ENCODE measurements at regions of chr10 and their contacts with region 1.

Region 1: DNA sequence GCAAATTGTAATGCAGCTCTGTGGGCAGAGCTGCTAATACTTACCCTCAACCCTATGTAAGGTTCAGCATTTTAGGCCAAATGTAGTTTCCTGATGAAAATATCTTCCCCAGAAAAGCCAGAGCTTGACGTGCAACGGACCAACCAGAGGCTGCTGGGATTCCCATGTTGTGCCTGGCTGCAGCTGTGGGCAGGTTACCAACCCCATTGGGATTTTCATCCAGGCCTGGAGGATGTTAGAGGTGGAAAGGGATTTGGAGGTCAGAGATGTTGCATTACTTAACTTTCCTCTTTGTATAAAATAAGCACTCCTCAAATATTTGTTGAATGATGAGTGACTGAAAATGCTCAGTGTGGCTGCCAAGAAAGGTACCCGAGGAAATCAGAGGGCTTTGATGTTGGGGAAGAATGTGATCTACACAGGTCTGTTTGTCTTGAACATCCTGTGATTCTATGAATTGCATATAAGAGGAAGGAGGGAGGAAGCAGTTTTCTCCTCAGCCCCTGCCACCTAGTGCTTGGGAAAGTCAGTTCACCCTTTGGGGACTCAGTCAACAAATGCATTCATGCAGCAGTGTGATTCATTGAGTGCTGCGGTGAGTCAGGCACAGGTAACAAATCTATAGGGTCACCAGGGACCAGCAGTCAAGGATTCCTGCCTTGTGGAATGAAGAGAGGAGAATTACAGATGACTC is 487.2 kb downstream of the RPS24 start:
- DNase-seq: peak; percentile 68 to 71
- H3K4me3 ChIP-seq: no peak overlapping the region
- H3K4me3 Mint-ChIP-seq: no peak overlapping the region
- H3K27ac Mint-ChIP-seq: no peak overlapping the region
- H3K4me1 ChIP-seq: peaks cover 4% of the 10 kb centered on the region; the same call in 1 of the 2 replicates
- H3K4me1 Mint-ChIP-seq: peaks cover 15% of the 10 kb centered on the region
- H3K27me3 ChIP-seq: no peaks in the 10 kb centered on the region
- H3K27me3 Mint-ChIP-seq: no peaks in the 10 kb centered on the region
- CTCF ChIP-seq: peak; percentile 37 to 58

Region 2: DNA sequence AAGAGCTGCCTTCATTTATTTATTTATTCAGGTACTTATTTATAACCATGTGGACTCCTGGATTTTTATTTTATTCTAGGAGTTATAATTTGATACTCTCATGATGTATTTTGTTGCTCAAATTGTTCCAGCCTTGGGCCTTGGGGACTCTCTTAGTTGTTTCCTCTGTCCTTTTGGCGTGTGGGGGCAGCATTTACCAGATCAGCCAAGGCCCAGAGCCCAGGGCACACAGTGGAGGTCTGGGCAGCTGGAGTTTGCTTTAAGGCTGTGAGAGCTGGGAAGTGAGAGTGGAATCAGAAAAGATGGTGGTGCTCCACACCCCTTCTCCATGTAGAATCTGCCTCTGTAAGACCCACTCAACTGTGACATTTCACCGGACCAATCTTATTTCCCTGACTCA is 88.3 kb before region 1 on chr10:
- CTCF ChIA-PET with region 1: no interaction called
- POLR2A ChIA-PET with region 1: no interaction called
- intact Hi-C with region 1: loop called (anchors 5 kb)
- DNase-seq: peak in 1 of 2 experiments; percentile 34
- H3K4me3 ChIP-seq: no peak overlapping the region
- H3K4me3 Mint-ChIP-seq: no peak overlapping the region
- H3K27ac Mint-ChIP-seq: no peak overlapping the region
- H3K4me1 ChIP-seq: peaks cover 5% of the 10 kb centered on the region
- H3K4me1 Mint-ChIP-seq: no peaks in the 10 kb centered on the region
- H3K27me3 ChIP-seq: no peaks in the 10 kb centered on the region
- H3K27me3 Mint-ChIP-seq: no peaks in the 10 kb centered on the region
- CTCF ChIP-seq: peak in 1 of 2 experiments; percentile 42

Region 3: GRCh38 chr10:78458983-78459638 is 61.8 kb before region 1 on chr10:
- CTCF ChIA-PET with region 1: no interaction called
- POLR2A ChIA-PET with region 1: no interaction called
- intact Hi-C with region 1: loop called (anchors 1 kb)
- DNase-seq: peak; percentile 75 to 81
- H3K4me3 ChIP-seq: no peak overlapping the region
- H3K4me3 Mint-ChIP-seq: peak overlapping the region; percentile 37
- H3K27ac Mint-ChIP-seq: peak overlapping the region; percentile 61
- H3K4me1 ChIP-seq: peaks cover 43% of the 10 kb centered on the region
- H3K4me1 Mint-ChIP-seq: peaks cover 31% of the 10 kb centered on the region
- H3K27me3 ChIP-seq: no peaks in the 10 kb centered on the region
- H3K27me3 Mint-ChIP-seq: no peaks in the 10 kb centered on the region
- CTCF ChIP-seq: no peak

Region 4: DNA sequence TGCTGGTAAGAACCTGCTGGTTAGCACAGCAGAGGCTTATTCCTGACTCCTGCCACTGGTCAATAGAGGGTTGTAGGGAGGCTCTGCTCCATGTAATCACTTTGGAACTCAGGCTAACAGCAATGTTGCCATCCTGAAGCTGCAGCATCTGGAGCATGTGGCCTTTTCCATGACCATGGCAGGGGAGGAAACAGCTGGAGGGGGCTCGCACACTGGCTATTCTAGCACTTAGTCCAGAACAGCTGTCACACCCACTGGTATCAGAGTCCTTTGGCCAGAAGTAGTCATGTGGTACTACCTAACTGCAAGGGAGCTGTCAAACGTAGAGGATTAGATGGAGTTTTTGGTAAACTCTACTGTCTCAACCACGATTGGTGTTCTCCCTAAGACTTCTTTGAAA is 37.2 kb before region 1 on chr10:
- CTCF ChIA-PET with region 1: no interaction called
- POLR2A ChIA-PET with region 1: no interaction called
- intact Hi-C with region 1: no loop called
- DNase-seq: no peak
- H3K4me3 ChIP-seq: no peak overlapping the region
- H3K4me3 Mint-ChIP-seq: no peak overlapping the region
- H3K27ac Mint-ChIP-seq: no peak overlapping the region
- H3K4me1 ChIP-seq: peaks cover 6% of the 10 kb centered on the region
- H3K4me1 Mint-ChIP-seq: no peaks in the 10 kb centered on the region
- H3K27me3 ChIP-seq: no peaks in the 10 kb centered on the region; the same call in 1 of the 2 replicates
- H3K27me3 Mint-ChIP-seq: no peaks in the 10 kb centered on the region
- CTCF ChIP-seq: no peak

Region 5: DNA sequence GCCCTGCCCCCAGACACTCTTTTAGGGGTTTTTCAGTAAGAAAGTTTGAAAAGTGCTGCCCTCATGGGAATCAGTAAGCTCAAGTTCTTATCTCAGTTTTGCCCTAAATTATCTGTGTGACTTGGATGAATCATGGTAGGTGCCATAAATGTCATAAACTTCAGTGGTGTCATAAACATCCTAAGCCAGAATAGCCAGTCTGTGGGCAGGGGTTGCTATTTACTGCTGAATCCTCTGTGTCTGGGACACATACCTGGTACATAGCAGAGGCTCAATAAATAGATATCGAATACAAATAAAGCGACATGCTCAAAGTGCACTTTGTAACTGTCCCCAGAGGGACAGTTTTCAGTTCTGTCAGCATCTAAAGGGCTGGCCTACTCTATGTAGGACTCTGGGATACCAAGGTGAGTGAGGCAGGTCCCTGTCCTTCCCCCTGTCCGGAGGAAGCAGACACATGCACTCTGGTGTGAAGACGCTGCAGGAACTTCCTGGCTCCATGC is 14.9 kb after region 1 on chr10:
- CTCF ChIA-PET with region 1: no interaction called
- POLR2A ChIA-PET with region 1: no interaction called
- intact Hi-C with region 1: loop called (anchors 1 kb)
- DNase-seq: peak; percentile 59 to 76
- H3K4me3 ChIP-seq: no peak overlapping the region
- H3K4me3 Mint-ChIP-seq: no peak overlapping the region
- H3K27ac Mint-ChIP-seq: peak overlapping the region; percentile 36
- H3K4me1 ChIP-seq: peaks cover 36% of the 10 kb centered on the region
- H3K4me1 Mint-ChIP-seq: peaks cover 19% of the 10 kb centered on the region
- H3K27me3 ChIP-seq: no peaks in the 10 kb centered on the region
- H3K27me3 Mint-ChIP-seq: no peaks in the 10 kb centered on the region
- CTCF ChIP-seq: no peak

Region 6: DNA sequence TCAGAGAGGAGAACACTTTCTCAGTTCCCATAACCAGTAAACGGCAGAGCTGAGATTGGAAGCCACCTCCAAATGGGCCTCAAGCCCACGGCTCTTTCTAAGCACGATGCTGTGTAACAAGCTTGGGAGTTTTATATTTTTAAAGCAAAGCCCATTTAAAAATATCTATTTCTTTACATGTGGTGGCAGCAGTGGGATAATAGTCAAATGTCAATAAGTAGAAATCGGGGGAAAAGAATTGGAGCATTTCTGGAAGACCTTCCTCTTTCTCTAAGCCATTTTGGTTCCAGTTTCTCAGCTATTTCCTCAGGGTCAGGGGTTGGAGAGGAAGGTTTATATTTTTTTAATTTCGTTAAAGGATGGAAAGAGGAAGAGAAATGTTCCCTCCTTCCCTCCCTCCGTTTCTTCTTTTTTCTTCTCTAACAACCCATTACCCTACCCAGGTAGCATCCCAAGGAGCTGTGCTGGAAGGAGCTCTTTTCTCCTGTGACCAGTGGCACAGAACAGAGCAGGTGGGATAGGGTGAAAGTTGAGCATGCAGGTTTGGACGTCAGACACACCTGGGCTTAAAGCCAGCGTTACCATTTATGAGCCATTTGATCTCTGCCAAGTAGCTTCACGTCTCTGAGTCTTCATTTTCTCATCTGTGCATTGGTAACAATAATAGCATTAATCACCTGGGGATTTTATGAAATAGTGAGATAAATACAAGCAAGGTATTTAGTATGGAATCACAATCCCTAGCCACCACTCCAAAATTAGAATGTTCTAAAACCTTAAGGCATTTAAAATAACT is 28.5 kb after region 1 on chr10:
- CTCF ChIA-PET with region 1: no interaction called
- POLR2A ChIA-PET with region 1: no interaction called
- intact Hi-C with region 1: no loop called
- DNase-seq: no peak
- H3K4me3 ChIP-seq: no peak overlapping the region
- H3K4me3 Mint-ChIP-seq: no peak overlapping the region
- H3K27ac Mint-ChIP-seq: no peak overlapping the region
- H3K4me1 ChIP-seq: peaks cover 20% of the 10 kb centered on the region
- H3K4me1 Mint-ChIP-seq: peaks cover 16% of the 10 kb centered on the region
- H3K27me3 ChIP-seq: no peaks in the 10 kb centered on the region
- H3K27me3 Mint-ChIP-seq: no peaks in the 10 kb centered on the region
- CTCF ChIP-seq: no peak

Region 7: DNA sequence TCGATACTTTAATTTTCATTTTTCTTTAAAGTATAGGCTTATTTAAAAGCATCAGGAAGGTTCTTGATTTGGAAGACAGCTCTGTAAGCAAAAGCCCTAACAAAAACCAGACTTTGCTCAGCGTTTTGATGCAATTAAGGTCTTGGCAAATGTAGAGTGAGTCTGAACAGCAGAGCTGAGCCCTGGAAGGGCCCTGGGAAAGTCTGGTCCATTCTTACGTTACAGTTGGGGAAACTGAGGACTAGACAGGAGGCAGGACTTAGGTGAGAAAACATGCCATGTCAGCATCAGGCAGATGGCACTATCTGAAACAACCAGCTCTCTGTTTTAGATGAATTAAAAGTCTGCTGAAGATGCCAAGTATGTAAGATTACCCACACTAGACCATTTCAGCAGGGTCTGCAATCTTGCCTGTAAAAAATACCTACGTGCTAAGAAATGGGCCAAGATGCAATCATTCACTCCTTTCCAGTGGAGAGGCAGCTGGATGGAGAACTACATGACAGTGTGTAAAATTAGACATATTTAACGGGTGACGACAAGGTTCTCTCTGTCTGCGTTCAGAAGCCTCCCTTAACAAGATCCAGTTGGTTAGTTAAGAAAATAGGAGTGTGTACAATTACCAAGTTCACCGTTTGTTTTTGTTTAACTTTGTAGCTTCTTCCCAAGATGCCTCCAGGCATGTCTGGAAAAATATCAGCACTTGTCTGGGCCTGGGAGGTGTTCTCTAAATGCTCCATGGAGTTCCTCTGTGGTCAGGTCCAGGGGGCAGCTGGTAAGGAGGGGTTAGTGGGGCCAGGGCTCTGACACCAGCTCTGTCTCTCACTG is 45.6 kb after region 1 on chr10:
- CTCF ChIA-PET with region 1: no interaction called
- POLR2A ChIA-PET with region 1: no interaction called
- intact Hi-C with region 1: no loop called
- DNase-seq: no peak
- H3K4me3 ChIP-seq: no peak overlapping the region
- H3K4me3 Mint-ChIP-seq: no peak overlapping the region
- H3K27ac Mint-ChIP-seq: no peak overlapping the region
- H3K4me1 ChIP-seq: peaks cover 12% of the 10 kb centered on the region; the same call in 1 of the 2 replicates
- H3K4me1 Mint-ChIP-seq: peaks cover 19% of the 10 kb centered on the region
- H3K27me3 ChIP-seq: no peaks in the 10 kb centered on the region
- H3K27me3 Mint-ChIP-seq: no peaks in the 10 kb centered on the region
- CTCF ChIP-seq: no peak

Region 8: DNA sequence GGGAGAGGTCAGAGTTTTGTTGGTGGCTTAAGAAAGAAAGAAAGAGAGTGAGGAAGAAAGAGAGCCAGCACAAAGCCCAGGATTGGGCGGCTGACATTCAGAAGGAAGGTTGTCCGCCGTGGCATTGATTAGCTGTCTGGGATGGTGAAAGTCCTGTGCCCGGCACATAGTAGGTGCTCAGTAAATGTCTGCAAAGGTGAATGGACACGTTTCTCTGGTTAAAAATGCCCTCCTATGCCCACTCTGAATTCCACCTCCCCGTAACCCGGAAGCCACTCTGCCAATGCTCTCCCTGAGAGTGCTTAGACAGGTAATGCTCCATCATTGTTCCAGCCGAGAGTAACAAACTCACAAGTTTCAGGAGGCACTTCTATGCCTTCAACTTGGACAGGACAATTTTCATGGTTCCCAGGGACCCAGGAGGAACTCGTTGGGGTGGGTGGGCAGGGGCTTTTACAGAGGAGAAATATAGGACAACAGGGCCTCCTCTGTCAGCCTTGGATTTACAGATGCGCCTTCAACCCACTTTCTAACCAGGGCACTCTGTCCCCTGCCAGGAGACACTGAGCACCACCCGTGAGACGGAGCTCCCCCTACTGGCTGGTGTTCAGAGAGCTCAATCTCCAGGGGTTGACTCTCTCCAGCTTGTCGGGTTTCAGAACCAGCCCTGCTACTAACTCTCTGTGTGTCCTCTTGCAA is 136.4 kb after region 1 on chr10:
- CTCF ChIA-PET with region 1: no interaction called
- POLR2A ChIA-PET with region 1: no interaction called
- intact Hi-C with region 1: loop called (anchors 5 kb)
- DNase-seq: peak; percentile 69 to 78
- H3K4me3 ChIP-seq: no peak overlapping the region
- H3K4me3 Mint-ChIP-seq: no peak overlapping the region
- H3K27ac Mint-ChIP-seq: no peak overlapping the region
- H3K4me1 ChIP-seq: no peaks in the 10 kb centered on the region
- H3K4me1 Mint-ChIP-seq: no peaks in the 10 kb centered on the region
- H3K27me3 ChIP-seq: no peaks in the 10 kb centered on the region
- H3K27me3 Mint-ChIP-seq: no peaks in the 10 kb centered on the region
- CTCF ChIP-seq: peak; percentile 70 to 79